ENCODE measurements at regions of chr1 and their contacts with region 1.

Region 1: GRCh38 chr1:159924981-159925712 is at the start of gene TAGLN2:
- DNase-seq: peak; percentile 94
- ATAC-seq: peak; percentile 69
- H3K4me3 Mint-ChIP-seq: peak within 1 kb of the TSS; percentile 95
- H3K27ac Mint-ChIP-seq: peak within 1 kb of the TSS; percentile 98
- H3K4me1 Mint-ChIP-seq: peaks cover 38% of the 10 kb centered on the region
- H3K27me3 Mint-ChIP-seq: no peaks in the 10 kb centered on the region
- total RNA-seq, gene TAGLN2: 410 to 495 TPM

Region 2: GRCh38 chr1:159780583-159781582 is 144.3 kb before region 1 on chr1 and contains the start of gene DUSP23:
- CTCF ChIA-PET with region 1: interaction called, 5 read pairs
- POLR2A ChIA-PET with region 1: no interaction called
- intact Hi-C with region 1: loop called (anchors 1 kb)
- DNase-seq: peak; percentile 97
- ATAC-seq: peak; percentile 99
- H3K4me3 Mint-ChIP-seq: peak within 1 kb of the TSS; percentile 70
- H3K27ac Mint-ChIP-seq: peak within 1 kb of the TSS; percentile 14
- H3K4me1 Mint-ChIP-seq: peaks cover 12% of the 10 kb centered on the region
- H3K27me3 Mint-ChIP-seq: peaks cover 2% of the 10 kb centered on the region
- total RNA-seq, gene DUSP23: 23.9 to 26.8 TPM

Region 3: GRCh38 chr1:159877695-159878444 is 47.3 kb before region 1 on chr1:
- CTCF ChIA-PET with region 1: no interaction called
- POLR2A ChIA-PET with region 1: no interaction called
- intact Hi-C with region 1: no loop called
- DNase-seq: no peak
- ATAC-seq: no peak
- H3K4me3 Mint-ChIP-seq: no peak overlapping the region
- H3K27ac Mint-ChIP-seq: no peak overlapping the region
- H3K4me1 Mint-ChIP-seq: no peaks in the 10 kb centered on the region
- H3K27me3 Mint-ChIP-seq: no peaks in the 10 kb centered on the region

Region 4: DNA sequence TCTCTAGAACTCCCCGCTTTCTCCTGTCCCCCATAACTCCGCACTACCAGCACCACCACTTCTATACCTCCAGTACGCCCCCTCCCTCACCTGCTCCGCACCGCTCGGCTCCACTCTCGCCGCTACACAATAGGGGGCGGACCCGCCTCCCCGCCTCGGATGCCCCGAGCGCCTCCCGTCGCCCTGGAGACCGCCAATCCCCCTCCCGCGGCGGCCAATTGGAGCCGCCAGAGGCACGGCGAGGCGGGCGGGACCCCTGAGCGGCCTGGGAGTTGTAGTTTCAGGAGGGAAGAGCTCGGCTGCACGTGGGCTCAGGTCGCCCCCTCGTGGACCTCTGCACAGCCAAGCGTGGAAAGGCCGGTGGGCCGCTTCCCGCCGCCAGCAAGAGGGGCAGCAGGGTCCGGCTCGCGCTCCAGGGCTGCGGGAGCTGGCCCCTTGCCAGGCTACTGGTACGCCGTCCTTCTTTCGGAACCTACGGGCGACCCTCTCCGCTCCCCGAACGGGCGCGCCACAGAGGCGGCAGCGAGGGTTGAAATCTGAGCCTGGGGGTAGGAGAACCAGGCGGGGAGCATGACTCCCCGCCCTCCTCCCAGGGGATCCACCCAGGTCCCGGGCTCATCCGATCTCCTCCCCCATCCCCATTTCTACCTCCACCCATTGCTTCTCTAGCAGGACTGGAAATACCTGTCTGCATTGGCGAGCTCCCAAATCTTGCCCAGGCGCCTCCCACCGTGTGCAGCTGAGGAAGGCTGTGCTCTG is 20.5 kb after region 1 on chr1 and contains the start of gene IGSF9:
- CTCF ChIA-PET with region 1: no interaction called
- POLR2A ChIA-PET with region 1: interaction called, 10 read pairs
- intact Hi-C with region 1: loop called in 1 of 2 experiments (anchors 1 kb)
- DNase-seq: peak; percentile 75
- ATAC-seq: peak; percentile 92
- H3K4me3 Mint-ChIP-seq: peak within 1 kb of the TSS; percentile 35
- H3K27ac Mint-ChIP-seq: no peak within 1 kb of the TSS
- H3K4me1 Mint-ChIP-seq: peaks cover 7% of the 10 kb centered on the region
- H3K27me3 Mint-ChIP-seq: peaks cover 30% of the 10 kb centered on the region
- total RNA-seq, gene IGSF9: 0.07 TPM in 1 of 2 experiments, not detected in the other

Region 5: GRCh38 chr1:160205242-160206035 is 280.3 kb after region 1 on chr1 and contains the start of gene PEA15:
- CTCF ChIA-PET with region 1: no interaction called
- POLR2A ChIA-PET with region 1: no interaction called
- intact Hi-C with region 1: loop called in 1 of 2 experiments (anchors 10 kb)
- DNase-seq: peak; percentile 83
- ATAC-seq: peak; percentile 76
- H3K4me3 Mint-ChIP-seq: peak within 1 kb of the TSS; percentile 81
- H3K27ac Mint-ChIP-seq: peak within 1 kb of the TSS; percentile 86
- H3K4me1 Mint-ChIP-seq: peaks cover 47% of the 10 kb centered on the region
- H3K27me3 Mint-ChIP-seq: no peaks in the 10 kb centered on the region
- total RNA-seq, gene PEA15: 42.5 to 63.4 TPM

Region 6: DNA sequence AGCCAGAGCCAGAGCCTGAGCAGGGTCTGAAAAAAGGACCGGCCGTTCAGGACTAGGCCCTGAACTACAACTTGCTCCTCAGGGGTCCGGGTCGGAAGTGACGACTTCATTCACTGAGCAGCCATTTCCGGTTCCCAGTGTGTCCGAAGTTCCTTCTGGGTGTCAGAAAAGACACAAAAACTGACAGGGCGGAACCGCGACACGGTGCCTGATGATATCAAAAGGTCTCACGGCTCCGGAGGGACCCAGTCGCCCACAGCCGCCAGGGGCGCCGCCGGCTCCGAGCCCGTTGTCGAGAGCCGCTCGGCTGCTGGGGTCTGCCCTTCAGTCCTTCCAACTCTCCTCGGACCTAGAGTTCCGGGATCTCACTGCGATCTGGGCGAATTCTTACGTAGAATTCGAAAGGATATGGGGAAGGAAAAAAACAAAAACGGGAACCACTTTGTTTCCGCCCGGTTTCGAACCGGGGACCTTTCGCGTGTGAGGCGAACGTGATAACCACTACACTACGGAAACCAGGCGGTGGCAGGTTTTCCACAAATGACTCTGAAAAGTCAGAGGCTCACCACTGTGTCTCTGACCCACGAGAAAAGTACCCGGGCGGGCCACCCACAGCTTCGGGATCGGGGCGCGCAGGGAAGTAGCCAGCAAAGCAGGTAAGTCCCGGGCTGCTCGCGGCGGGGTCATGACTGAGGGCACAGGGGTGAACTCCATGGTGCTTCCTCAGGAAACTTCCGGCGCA is 1474.3 kb after region 1 on chr1:
- CTCF ChIA-PET with region 1: no interaction called
- POLR2A ChIA-PET with region 1: no interaction called
- intact Hi-C with region 1: loop called in 1 of 2 experiments (anchors 10 kb)
- DNase-seq: peak; percentile 92
- ATAC-seq: peak; percentile 83
- H3K4me3 Mint-ChIP-seq: peak overlapping the region; percentile 89
- H3K27ac Mint-ChIP-seq: peak overlapping the region; percentile 100
- H3K4me1 Mint-ChIP-seq: peaks cover 34% of the 10 kb centered on the region
- H3K27me3 Mint-ChIP-seq: peaks cover 9% of the 10 kb centered on the region